ENCODE measurements at regions of chr6 and their contacts with region 1.

Region 1: DNA sequence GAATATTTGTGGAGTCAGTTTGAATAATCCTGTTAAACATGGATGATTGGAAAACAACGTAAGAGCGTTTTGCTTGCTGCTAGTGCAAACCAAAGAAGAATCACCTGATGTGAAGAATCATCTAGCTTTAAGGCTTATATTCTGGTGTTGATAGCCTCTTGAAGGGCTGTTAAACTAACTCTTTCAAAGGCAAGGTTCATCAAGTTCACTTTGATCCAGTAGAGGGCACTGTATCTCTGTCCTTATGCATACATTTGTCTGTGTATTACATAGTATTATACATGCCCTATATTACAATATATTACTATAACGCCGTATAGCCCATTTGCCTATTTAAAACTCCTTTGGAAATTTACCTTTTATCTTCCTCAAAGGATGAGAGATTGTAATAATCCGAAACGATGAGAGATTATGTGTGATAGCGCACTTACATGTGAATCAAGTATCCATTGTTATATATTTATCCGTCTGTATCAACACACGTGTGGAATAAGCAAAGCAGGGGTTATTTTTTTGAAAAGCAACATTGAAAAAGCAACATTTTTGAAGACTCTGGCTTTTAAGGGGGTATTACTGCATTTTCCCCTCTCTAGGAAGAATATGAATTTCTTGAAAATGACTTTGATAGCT is 50.8 kb upstream of the NRN1 start:
- DNase-seq: no peak
- ATAC-seq: peak in 3 of 4 donors; percentile 51 to 62 (median 61)
- H3K4me3 ChIP-seq: no peak overlapping the region
- H3K27ac ChIP-seq: no peak overlapping the region
- H3K4me1 ChIP-seq: no peaks in the 10 kb centered on the region
- H3K27me3 ChIP-seq: peaks cover 0 to 9% (median 0%) of the 10 kb centered on the region in 9 donors
- CTCF ChIP-seq: peak; percentile 51 to 79 (median 67)
- POLR2A ChIP-seq: no peak

Region 2: DNA sequence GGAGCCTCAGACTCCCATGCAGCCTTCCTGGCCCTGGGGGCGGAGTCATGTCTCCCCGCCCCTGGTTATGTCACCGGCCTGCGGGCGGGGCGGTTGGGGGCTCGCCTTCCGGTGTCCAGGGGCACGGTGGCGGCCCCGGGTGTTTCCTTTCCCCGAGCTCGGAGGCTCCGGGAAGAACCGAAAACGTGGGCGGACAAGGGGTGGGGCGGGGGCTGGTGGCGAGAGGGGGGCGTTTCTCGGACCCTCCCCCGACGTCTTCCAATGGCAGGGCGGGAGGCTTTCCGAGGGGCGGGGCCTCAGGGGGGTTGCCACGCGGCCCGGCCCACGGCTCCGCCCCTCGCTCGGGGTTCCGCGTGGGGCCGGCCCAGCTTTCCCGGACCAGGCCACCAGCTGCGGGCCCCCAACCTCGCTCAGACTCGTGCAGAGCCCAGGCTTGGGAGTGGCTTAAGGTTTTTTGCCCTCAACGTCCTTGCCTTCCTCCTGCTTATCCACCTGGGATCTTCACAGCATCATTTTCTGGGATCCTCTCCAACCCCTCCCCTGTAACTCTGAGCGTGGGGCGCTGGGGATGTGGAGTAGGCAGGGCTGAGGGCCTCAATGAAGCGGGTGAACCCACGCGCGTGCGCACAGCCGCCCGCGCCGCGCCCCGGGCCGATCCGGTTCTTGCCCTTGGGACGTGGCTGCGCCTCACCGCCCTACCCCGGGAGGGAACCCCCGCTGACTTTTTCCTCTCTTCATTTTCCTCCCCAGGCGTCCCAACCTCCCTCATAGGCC is 48.7 kb before region 1 on chr6:
- intact Hi-C with region 1: no loop called
- DNase-seq: peak; percentile 72 to 88 (median 81)
- ATAC-seq: peak; percentile 81 to 87 (median 82)
- H3K4me3 ChIP-seq: peak overlapping the region; percentile 6 to 65 (median 60)
- H3K27ac ChIP-seq: peak overlapping the region in 11 of 12 donors; percentile 35 to 89 (median 68)
- H3K4me1 ChIP-seq: peaks cover 0 to 44% (median 20%) of the 10 kb centered on the region in 12 donors
- H3K27me3 ChIP-seq: peaks cover 46 to 89% (median 69%) of the 10 kb centered on the region in 9 donors
- CTCF ChIP-seq: no peak
- POLR2A ChIP-seq: no peak

Region 3: DNA sequence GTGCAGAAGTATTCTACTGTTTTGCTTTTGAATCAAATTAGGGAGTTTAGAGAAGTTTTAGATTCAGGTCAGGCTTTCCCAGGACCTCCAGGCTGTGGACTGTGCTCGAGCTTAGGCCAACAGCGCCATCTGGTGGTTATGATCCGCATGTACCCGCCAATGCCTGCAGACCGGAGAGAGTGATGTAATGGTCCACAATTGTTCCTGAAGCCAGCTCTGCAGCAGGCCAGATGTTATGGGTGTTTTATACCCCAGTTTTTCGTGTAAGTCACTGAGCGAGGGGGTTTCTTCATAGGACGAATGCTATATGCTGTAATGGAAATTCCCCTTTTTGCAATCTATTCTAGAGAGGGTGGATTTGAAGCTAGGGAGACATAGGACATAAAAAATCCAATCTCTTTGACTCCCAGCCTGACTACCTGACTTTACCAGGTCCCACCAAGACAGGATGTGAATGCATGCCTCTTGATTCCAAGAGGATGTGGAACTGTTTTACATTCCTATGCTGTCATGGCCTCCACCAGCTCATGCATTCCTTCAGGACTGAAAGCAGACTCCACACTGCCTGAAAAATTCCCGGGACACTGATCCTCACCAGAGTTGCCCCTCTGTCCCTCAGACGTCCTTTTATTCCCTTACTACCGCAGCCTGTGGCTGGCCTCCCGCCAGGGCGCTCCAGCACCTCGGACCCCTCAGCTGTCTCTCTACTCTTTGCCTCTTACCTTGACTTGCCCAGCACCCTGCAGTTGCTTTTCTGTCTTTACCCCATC is 489.8 kb after region 1 on chr6:
- intact Hi-C with region 1: loop called (anchors 1 to 5 kb)
- DNase-seq: peak; percentile 84 to 90 (median 89)
- ATAC-seq: peak; percentile 95 to 97 (median 96)
- H3K4me3 ChIP-seq: peak overlapping the region; percentile 30 to 58 (median 52)
- H3K27ac ChIP-seq: peak overlapping the region in 5 of 12 donors; percentile 17 to 61 (median 47)
- H3K4me1 ChIP-seq: peaks cover 2 to 23% (median 9%) of the 10 kb centered on the region in 12 donors
- H3K27me3 ChIP-seq: peaks cover 0 to 19% (median 0%) of the 10 kb centered on the region in 9 donors
- CTCF ChIP-seq: peak; percentile 91 to 98 (median 96)
- POLR2A ChIP-seq: no peak